ENCODE measurements at regions of chr15 and their contacts with region 1.

Region 1: DNA sequence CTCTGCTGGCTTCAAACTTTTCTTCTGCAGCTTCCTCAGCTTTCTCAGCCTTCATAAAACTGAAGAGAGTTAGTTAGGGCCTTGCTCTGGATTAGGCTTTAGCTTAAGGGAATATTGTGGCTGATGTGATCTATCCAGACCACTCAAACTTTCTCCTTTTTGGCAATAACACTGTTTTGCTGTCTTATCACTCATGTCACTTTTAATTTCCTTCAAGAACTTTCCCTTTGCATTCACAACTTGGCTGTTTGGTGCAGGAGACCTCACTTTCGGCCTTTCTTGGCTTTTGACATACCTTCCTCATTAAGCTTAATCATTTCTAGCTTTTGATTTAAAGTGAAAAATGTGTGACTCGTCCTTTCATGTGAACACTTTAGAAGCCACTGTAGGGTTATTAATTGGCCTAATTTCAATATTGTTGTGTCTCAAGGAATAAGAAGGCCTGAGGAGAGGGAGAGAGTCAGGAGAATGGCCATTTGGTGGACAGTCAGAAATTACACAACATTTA is 60.7 kb downstream of the SLC24A1 start:
- DNase-seq: no peak
- ATAC-seq: no peak
- H3K4me3 Mint-ChIP-seq: no peak overlapping the region
- H3K27ac Mint-ChIP-seq: no peak overlapping the region
- H3K4me1 Mint-ChIP-seq: peaks cover 4% of the 10 kb centered on the region
- H3K27me3 Mint-ChIP-seq: no peaks in the 10 kb centered on the region
- CTCF ChIP-seq: no peak

Region 2: GRCh38 chr15:65460741-65461347 is 221.6 kb before region 1 on chr15:
- CTCF ChIA-PET with region 1: no interaction called
- POLR2A ChIA-PET with region 1: no interaction called
- intact Hi-C with region 1: no loop called
- DNase-seq: no peak
- ATAC-seq: peak; percentile 21
- H3K4me3 Mint-ChIP-seq: no peak overlapping the region
- H3K27ac Mint-ChIP-seq: peak overlapping the region; percentile 4
- H3K4me1 Mint-ChIP-seq: peaks cover 3% of the 10 kb centered on the region
- H3K27me3 Mint-ChIP-seq: no peaks in the 10 kb centered on the region
- CTCF ChIP-seq: no peak

Region 3: DNA sequence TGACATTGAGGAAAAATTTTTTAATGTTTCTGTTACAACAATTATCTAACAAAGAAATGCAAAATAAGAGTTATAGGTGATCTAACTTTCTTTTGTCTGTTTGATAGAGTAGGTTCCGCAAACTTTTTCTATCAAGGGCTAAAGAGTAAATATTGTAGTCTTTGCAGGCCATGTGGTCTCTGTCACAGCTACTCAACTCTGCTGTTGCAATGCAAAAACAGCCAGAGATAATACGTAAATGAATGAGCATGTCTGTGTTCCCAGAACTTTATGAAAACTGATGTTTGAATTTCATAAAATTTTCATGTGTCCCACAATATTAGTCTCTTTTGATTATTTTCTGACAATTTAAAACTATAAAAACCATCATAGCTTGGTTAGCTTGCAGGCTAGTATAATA is 12.6 kb after region 1 on chr15:
- CTCF ChIA-PET with region 1: no interaction called
- POLR2A ChIA-PET with region 1: no interaction called
- intact Hi-C with region 1: loop called (anchors 2 kb)
- DNase-seq: no peak
- ATAC-seq: no peak
- H3K4me3 Mint-ChIP-seq: no peak overlapping the region
- H3K27ac Mint-ChIP-seq: no peak overlapping the region
- H3K4me1 Mint-ChIP-seq: no peaks in the 10 kb centered on the region
- H3K27me3 Mint-ChIP-seq: no peaks in the 10 kb centered on the region
- CTCF ChIP-seq: no peak

Region 4: DNA sequence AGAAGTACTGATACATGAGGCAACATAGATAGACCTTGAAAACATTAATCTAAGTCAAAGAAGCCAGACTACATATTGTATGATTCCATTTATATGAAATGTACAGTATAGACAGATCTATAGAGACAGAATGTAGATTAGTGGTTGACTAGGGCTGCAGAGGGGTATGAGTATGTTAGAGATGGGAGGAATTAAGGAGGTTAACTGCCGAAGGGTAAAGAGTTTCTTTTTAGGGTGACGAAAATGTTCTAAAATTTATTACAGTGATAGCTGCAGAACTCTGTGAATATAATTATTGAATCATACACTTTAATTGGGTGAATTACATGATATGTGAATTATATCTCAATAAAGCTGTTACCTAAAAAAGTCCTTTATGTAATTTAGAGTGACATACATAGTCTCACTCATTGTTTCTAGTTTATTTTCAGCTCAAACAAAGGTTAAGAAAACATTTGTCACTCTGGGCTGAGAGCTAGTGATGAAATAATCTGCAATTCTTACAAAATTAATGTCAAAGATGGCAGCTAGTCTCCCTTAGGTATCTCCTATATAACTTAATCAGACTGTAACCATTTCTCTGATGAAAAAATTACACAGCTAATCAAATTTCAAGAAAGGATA is 48.2 kb after region 1 on chr15:
- CTCF ChIA-PET with region 1: no interaction called
- POLR2A ChIA-PET with region 1: no interaction called
- intact Hi-C with region 1: loop called (anchors 10 kb)
- DNase-seq: no peak
- ATAC-seq: no peak
- H3K4me3 Mint-ChIP-seq: no peak overlapping the region
- H3K27ac Mint-ChIP-seq: no peak overlapping the region
- H3K4me1 Mint-ChIP-seq: no peaks in the 10 kb centered on the region
- H3K27me3 Mint-ChIP-seq: no peaks in the 10 kb centered on the region
- CTCF ChIP-seq: no peak